ENCODE measurements at regions of chr5 and their contacts with region 1.

Region 1: GRCh38 chr5:80711938-80712337 is 57.2 kb upstream of the DHFR start:
- DNase-seq: peak in 1 of 2 experiments; percentile 9
- H3K4me3 ChIP-seq: no peak overlapping the region
- H3K27ac ChIP-seq: no peak overlapping the region
- H3K4me1 ChIP-seq: no peaks in the 10 kb centered on the region
- H3K27me3 ChIP-seq: no peaks in the 10 kb centered on the region
- CTCF ChIP-seq: peak; percentile 52

Region 2: GRCh38 chr5:80541392-80541791 is 170.5 kb before region 1 on chr5:
- CTCF ChIA-PET with region 1: no interaction called
- POLR2A ChIA-PET with region 1: no interaction called
- intact Hi-C with region 1: no loop called
- DNase-seq: no peak
- H3K4me3 ChIP-seq: no peak overlapping the region
- H3K27ac ChIP-seq: no peak overlapping the region
- H3K4me1 ChIP-seq: no peaks in the 10 kb centered on the region
- H3K27me3 ChIP-seq: no peaks in the 10 kb centered on the region
- CTCF ChIP-seq: no peak

Region 3: GRCh38 chr5:80754900-80755299 is 43.0 kb after region 1 on chr5:
- CTCF ChIA-PET with region 1: no interaction called
- POLR2A ChIA-PET with region 1: no interaction called
- intact Hi-C with region 1: no loop called
- DNase-seq: no peak
- H3K4me3 ChIP-seq: no peak overlapping the region
- H3K27ac ChIP-seq: no peak overlapping the region
- H3K4me1 ChIP-seq: no peaks in the 10 kb centered on the region
- H3K27me3 ChIP-seq: no peaks in the 10 kb centered on the region
- CTCF ChIP-seq: no peak

Region 4: DNA sequence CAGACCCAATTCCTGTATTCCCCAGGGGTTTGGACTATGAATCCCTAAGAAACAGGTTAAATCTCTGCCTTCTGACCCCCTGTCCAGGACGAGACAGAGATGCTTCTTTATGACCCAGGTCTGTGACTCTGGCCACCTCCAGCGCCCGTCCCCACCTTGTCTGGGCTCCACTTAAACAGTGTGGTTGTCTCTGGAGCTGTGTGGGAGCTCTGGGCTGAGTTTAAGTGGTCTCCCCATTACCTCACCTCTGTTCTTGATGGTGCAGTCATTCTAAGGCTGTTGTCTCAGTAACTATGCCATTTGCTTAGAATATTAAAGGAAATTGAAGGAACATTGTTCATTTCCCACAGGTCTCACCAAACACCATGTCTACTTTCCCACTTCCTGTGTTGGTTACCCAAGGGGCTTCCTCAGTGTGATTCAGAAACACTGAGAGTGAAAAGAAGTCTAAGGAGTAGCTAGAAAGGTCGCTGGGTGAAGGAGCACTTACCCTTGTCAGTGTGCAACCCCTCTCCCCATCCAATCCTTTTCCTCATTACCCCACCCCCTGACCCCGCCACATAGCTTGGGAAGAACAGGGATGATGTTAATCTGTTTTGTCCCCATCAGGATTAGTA is 393.4 kb after region 1 on chr5:
- CTCF ChIA-PET with region 1: no interaction called
- POLR2A ChIA-PET with region 1: no interaction called
- intact Hi-C with region 1: loop called (anchors 5 kb)
- DNase-seq: no peak
- H3K4me3 ChIP-seq: no peak overlapping the region
- H3K27ac ChIP-seq: no peak overlapping the region
- H3K4me1 ChIP-seq: no peaks in the 10 kb centered on the region
- H3K27me3 ChIP-seq: no peaks in the 10 kb centered on the region
- CTCF ChIP-seq: no peak

Region 5: DNA sequence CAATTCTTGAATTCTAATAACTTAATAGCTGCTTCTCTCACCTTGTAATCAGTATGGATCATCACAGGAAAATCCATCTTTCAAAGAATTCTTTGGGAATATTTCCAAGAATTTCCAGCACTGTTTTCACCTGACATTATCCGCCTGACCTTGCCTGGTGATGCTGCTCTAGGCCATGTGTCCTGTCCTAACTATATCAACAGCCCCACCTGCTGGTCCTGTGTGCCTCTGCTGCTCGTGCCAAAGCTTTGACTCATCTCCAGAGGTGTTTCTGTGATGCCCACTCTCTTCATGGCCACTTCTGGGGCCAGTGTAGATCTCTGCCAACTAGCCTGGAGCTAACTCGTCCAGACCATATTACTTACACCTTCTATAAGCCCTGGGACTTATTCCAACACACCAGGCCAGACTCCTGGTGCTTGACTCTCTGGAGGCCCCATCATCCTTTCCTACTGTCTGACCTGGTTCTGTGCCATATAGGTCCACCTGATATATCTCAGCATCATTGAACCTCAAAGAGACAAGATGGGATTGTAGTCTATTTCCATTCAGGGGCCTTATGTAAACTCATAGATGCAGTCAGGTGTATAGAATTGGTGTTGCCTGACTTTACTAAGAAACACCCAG is 453.7 kb after region 1 on chr5:
- CTCF ChIA-PET with region 1: no interaction called
- POLR2A ChIA-PET with region 1: no interaction called
- intact Hi-C with region 1: loop called (anchors 1 kb)
- DNase-seq: peak; percentile 57 to 66
- H3K4me3 ChIP-seq: no peak overlapping the region
- H3K27ac ChIP-seq: no peak overlapping the region
- H3K4me1 ChIP-seq: no peaks in the 10 kb centered on the region
- H3K27me3 ChIP-seq: no peaks in the 10 kb centered on the region
- CTCF ChIP-seq: peak; percentile 79

Measured in PC-9 (cell line).